ENCODE measurements at regions of chr7 and their contacts with region 1.

Region 1: GRCh38 chr7:77450054-77450453 is 33.9 kb upstream of the GSAP start:
- DNase-seq: no peak

Region 2: GRCh38 chr7:77674878-77675277 is 224.8 kb after region 1 on chr7:
- intact Hi-C with region 1: no loop called
- DNase-seq: peak in 2 of 42 donors; percentile 2 to 27

Region 3: DNA sequence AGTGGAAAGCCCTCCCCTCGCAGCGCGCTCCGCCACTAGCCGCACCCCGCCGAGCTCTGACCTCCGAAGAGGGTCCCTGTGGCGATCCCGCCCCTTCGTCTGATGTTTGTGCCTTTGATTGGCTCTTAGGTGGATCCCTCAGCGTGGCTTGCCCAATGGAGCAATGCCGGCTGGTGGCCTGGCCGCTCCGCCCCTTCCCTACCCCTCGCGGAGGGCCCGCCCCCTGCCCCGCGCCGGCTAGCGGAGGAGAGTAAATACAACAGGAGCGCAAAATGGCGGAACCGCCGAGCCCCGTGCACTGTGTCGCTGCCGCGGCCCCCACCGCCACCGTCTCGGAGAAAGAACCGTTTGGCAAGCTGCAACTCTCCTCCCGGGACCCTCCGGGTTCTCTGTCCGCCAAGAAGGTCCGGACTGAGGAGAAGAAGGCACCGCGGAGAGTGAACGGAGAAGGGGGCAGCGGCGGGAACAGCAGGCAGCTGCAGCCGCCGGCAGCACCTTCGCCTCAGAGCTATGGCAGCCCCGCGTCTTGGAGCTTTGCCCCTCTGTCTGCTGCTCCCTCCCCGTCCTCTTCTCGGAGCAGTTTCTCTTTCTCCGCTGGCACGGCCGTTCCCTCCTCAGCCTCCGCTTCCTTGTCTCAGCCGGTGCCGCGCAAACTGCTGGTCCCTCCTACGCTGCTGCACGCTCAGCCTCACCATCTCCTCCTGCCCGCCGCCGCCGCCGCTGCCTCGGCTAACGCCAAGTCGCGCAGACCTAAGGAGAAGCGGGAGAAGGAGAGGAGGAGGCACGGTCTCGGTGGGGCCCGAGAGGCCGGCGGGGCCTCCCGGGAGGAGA is 246.4 kb after region 1 on chr7 and contains the start of gene RSBN1L:
- intact Hi-C with region 1: loop called (anchors 2 kb)
- DNase-seq: peak; percentile 97 to 100 (median 99)